IMR-90 (cell line): ENCODE measurements at regions of chr2 and their contacts with region 1.

Region 1: DNA sequence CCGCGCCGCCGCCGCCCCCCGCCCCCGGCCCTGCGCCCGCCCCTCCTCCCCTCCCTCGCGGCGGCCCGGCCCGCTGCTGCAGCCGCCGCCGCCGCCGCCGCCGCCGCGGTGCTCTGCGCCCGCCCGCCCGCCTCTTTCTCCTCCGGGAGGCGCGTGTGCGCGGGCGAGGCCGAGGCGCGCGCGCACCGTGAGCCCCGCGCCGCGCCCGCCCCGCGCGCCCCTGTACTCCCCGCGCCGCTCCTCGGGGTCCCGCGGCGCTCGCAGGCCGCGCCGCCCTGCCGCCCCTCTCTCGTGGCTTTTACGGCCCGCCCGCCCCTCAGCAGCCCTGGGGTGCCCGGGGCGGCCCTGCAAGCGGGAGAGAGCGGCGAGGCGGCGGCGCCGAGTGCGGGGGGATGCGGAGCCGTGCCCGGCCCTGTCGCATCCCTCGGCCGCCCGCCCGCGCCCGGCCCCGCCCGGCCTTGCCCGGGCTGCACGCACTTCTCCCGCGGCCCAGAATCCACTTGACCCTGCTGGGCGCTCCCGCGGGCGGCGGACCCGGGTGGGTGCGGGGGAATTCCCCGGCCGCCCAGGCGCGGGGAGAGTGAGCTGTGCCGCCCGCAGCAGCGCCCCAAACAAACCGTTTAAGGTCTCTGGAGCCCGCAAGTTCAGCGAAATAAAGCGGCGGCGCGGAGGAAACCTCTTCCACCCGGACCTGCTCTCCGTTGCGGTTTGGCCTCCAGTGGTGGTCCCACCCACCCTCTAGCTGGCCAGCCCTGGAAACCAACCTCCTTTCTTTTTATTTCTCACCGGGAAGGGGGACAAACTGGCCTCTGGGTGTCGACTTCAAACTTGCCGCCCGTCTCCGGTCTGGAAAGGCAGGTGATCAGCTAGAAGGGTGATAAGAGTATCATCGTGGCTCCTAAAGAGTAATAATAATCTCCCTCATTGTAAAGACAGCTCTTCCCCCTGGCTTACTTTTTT is 37.4 kb downstream of the AFF3 start:
- DNase-seq: peak; percentile 11
- ATAC-seq: peak; percentile 78
- H3K4me3 ChIP-seq: peak overlapping the region; percentile 46
- H3K27ac ChIP-seq: peak overlapping the region; percentile 73
- H3K4me1 ChIP-seq: peaks cover 14% of the 10 kb centered on the region
- H3K27me3 ChIP-seq: no peaks in the 10 kb centered on the region
- CTCF ChIP-seq: no peak
- POLR2A ChIP-seq: no peak
- RAD21 ChIP-seq: no peak

Region 2: GRCh38 chr2:100021791-100022340 is 83.1 kb before region 1 on chr2:
- CTCF ChIA-PET with region 1: no interaction called
- POLR2A ChIA-PET with region 1: no interaction called
- dilution Hi-C with region 1: no loop called
- in situ Hi-C with region 1: no loop called
- intact Hi-C with region 1: no loop called
- DNase-seq: no peak
- ATAC-seq: no peak
- H3K4me3 ChIP-seq: no peak overlapping the region
- H3K27ac ChIP-seq: no peak overlapping the region
- H3K4me1 ChIP-seq: peaks cover 9% of the 10 kb centered on the region
- H3K27me3 ChIP-seq: no peaks in the 10 kb centered on the region
- CTCF ChIP-seq: no peak
- POLR2A ChIP-seq: no peak
- RAD21 ChIP-seq: no peak

Region 3: GRCh38 chr2:100230754-100231153 is 125.8 kb after region 1 on chr2:
- CTCF ChIA-PET with region 1: no interaction called
- POLR2A ChIA-PET with region 1: no interaction called
- dilution Hi-C with region 1: no loop called
- in situ Hi-C with region 1: no loop called
- intact Hi-C with region 1: loop called (anchors 5 kb)
- DNase-seq: peak; percentile 42
- ATAC-seq: no peak
- H3K4me3 ChIP-seq: no peak overlapping the region
- H3K27ac ChIP-seq: no peak overlapping the region
- H3K4me1 ChIP-seq: peaks cover 4% of the 10 kb centered on the region
- H3K27me3 ChIP-seq: peaks cover 10% of the 10 kb centered on the region
- CTCF ChIP-seq: no peak
- POLR2A ChIP-seq: no peak
- RAD21 ChIP-seq: no peak